A673 (cell line): ENCODE measurements at regions of chr7 and their contacts with region 1.

Region 1: GRCh38 chr7:16098585-16099179 is 322.7 kb downstream of the CRPPA start:
- DNase-seq: peak; percentile 46
- H3K4me3 ChIP-seq: no peak overlapping the region
- H3K27ac ChIP-seq: no peak overlapping the region
- H3K4me1 ChIP-seq: peaks cover 6% of the 10 kb centered on the region
- H3K27me3 ChIP-seq: peaks cover 9% of the 10 kb centered on the region
- CTCF ChIP-seq: peak; percentile 83

Region 2: DNA sequence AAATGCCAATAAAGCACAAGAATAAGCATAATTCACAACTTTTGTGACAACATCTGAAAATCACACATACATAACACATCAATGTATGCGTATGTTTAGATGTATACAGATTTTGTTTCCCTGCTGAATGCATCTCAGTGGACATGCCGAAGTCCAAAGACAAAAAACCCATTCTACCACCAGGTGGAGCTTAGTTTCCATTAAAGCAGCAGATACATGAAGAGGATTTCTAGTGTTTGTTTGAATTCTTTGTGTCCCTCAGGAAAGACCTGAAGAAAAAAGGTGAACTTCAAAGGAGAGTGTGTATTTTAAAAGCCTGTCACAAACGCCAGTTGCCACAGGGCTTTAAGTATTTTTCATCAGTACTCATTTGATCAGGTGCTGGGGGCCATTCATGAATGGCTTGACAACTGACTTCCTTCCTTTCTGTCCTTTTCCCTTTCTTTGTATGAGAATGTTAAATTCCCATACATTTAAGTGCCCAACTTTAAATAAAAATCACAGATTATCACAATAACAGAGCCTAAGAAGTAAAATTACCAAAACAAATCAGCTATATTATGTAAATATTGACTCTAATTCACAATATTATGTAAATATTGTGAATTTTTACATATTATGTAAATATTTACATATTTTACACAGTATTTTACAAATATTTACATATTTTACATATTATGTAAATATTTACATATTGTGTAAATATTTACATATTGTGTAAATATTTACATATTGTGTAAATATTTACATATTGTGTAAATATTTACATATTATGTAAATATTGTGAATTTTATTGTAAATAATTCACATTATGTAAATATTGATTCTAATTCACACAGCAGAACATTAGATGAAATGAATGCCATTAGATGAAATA is 20.4 kb before region 1 on chr7:
- CTCF ChIA-PET with region 1: interaction called, 3 read pairs
- POLR2A ChIA-PET with region 1: no interaction called
- intact Hi-C with region 1: loop called (anchors 1 kb)
- DNase-seq: peak; percentile 70
- H3K4me3 ChIP-seq: no peak overlapping the region
- H3K27ac ChIP-seq: no peak overlapping the region
- H3K4me1 ChIP-seq: peaks cover 3% of the 10 kb centered on the region
- H3K27me3 ChIP-seq: peaks cover 13% of the 10 kb centered on the region
- CTCF ChIP-seq: peak; percentile 81

Region 3: GRCh38 chr7:16114633-16115032 is 16.0 kb after region 1 on chr7:
- CTCF ChIA-PET with region 1: interaction called, 14 read pairs
- POLR2A ChIA-PET with region 1: no interaction called
- intact Hi-C with region 1: no loop called
- DNase-seq: peak; percentile 48
- H3K4me3 ChIP-seq: no peak overlapping the region
- H3K27ac ChIP-seq: no peak overlapping the region
- H3K4me1 ChIP-seq: no peaks in the 10 kb centered on the region
- H3K27me3 ChIP-seq: peaks cover 5% of the 10 kb centered on the region
- CTCF ChIP-seq: peak; percentile 71